ENCODE measurements at regions of chr20 and their contacts with region 1.

Region 1: GRCh38 chr20:5658912-5659345 is 91.3 kb upstream of the SHLD1 start:
- DNase-seq: peak in 12 of 14 experiments; percentile 14 to 87 (median 35)
- ATAC-seq: peak; percentile 95
- H3K4me3 ChIP-seq: no peak overlapping the region
- H3K4me3 Mint-ChIP-seq: no peak overlapping the region
- H3K27ac ChIP-seq: no peak overlapping the region
- H3K27ac Mint-ChIP-seq: peak overlapping the region; percentile 18
- H3K4me1 ChIP-seq: peaks cover 11% of the 10 kb centered on the region
- H3K4me1 Mint-ChIP-seq: peaks cover 12% of the 10 kb centered on the region
- H3K27me3 ChIP-seq: no peaks in the 10 kb centered on the region
- H3K27me3 Mint-ChIP-seq: no peaks in the 10 kb centered on the region
- CTCF ChIP-seq: no peak

Region 2: DNA sequence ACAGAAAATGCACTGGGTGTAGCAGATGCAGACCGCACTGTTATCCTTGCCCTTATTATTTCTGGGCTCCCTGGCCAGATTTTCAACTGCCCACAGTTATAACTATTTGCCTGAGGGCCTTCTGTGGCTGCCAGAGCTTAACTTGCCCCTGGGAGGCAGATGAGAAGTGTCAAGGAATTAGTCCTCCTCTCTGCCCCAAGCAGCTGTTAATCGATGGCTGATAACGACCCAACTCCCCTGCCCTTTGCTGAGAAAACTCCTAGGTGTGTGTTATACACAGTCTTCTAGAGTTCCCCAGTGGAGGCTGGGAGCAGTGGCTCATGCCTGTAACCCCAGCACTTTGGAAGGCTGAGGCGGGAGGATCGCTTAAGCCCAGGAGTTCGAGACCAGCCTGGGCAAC is 46.9 kb after region 1 on chr20:
- CTCF ChIA-PET with region 1: interaction called, 3 read pairs
- POLR2A ChIA-PET with region 1: no interaction called
- intact Hi-C with region 1: loop called (anchors 5 kb)
- DNase-seq: no peak
- ATAC-seq: no peak
- H3K4me3 ChIP-seq: no peak overlapping the region
- H3K4me3 Mint-ChIP-seq: no peak overlapping the region
- H3K27ac ChIP-seq: no peak overlapping the region
- H3K27ac Mint-ChIP-seq: no peak overlapping the region
- H3K4me1 ChIP-seq: no peaks in the 10 kb centered on the region
- H3K4me1 Mint-ChIP-seq: no peaks in the 10 kb centered on the region
- H3K27me3 ChIP-seq: no peaks in the 10 kb centered on the region
- H3K27me3 Mint-ChIP-seq: no peaks in the 10 kb centered on the region
- CTCF ChIP-seq: no peak

Region 3: GRCh38 chr20:6212903-6213302 is 554.0 kb after region 1 on chr20:
- CTCF ChIA-PET with region 1: no interaction called
- POLR2A ChIA-PET with region 1: no interaction called
- intact Hi-C with region 1: no loop called
- DNase-seq: no peak
- ATAC-seq: no peak
- H3K4me3 ChIP-seq: no peak overlapping the region
- H3K4me3 Mint-ChIP-seq: no peak overlapping the region
- H3K27ac ChIP-seq: no peak overlapping the region
- H3K27ac Mint-ChIP-seq: no peak overlapping the region
- H3K4me1 ChIP-seq: no peaks in the 10 kb centered on the region
- H3K4me1 Mint-ChIP-seq: no peaks in the 10 kb centered on the region
- H3K27me3 ChIP-seq: no peaks in the 10 kb centered on the region
- H3K27me3 Mint-ChIP-seq: peaks cover 12% of the 10 kb centered on the region
- CTCF ChIP-seq: no peak

Measured in CD4-positive, alpha-beta T cell (primary cell).